ENCODE measurements at regions of chr7 and their contacts with region 1.

Region 1: DNA sequence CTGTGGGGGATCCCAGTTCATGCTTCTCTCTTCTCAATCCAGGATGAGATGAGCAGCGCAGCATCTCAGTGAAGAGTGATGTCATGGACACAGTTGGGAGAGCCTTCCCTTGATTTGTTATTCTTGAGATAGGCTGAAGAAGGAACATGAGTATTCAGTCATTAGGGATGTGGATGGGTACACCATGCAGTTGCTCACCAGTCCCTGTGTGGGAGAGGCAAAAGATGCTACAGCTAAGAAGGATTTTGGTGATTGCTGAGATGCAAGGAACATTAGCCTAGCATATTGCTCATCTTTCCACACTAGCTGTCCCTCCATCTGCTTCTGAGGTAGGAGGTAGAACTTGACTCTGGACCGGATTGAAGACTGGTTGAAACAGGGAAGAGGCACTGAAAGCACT is 179.6 kb downstream of the GALNT17 start:
- DNase-seq: no peak
- ATAC-seq: no peak
- H3K4me3 ChIP-seq: no peak overlapping the region
- H3K27ac ChIP-seq: peak overlapping the region in 5 of 10 donors; percentile 25 to 85 (median 68)
- H3K4me1 ChIP-seq: peaks cover 0 to 14% (median 0%) of the 10 kb centered on the region in 9 donors
- H3K27me3 ChIP-seq: no peaks in the 10 kb centered on the region
- CTCF ChIP-seq: no peak

Region 2: GRCh38 chr7:71019706-71020105 is 291.9 kb before region 1 on chr7:
- intact Hi-C with region 1: no loop called
- DNase-seq: peak; percentile 6 to 18
- ATAC-seq: peak in 3 of 8 donors; percentile 48 to 54 (median 54)
- H3K4me3 ChIP-seq: no peak overlapping the region
- H3K27ac ChIP-seq: no peak overlapping the region
- H3K4me1 ChIP-seq: no peaks in the 10 kb centered on the region
- H3K27me3 ChIP-seq: no peaks in the 10 kb centered on the region
- CTCF ChIP-seq: no peak

Region 3: GRCh38 chr7:71266912-71267311 is 44.7 kb before region 1 on chr7:
- intact Hi-C with region 1: loop called in 1 of 10 experiments (anchors 2 kb)
- DNase-seq: no peak
- ATAC-seq: no peak
- H3K4me3 ChIP-seq: no peak overlapping the region
- H3K27ac ChIP-seq: no peak overlapping the region
- H3K4me1 ChIP-seq: peaks cover 0 to 24% (median 0%) of the 10 kb centered on the region in 9 donors
- H3K27me3 ChIP-seq: no peaks in the 10 kb centered on the region
- CTCF ChIP-seq: no peak

Region 4: DNA sequence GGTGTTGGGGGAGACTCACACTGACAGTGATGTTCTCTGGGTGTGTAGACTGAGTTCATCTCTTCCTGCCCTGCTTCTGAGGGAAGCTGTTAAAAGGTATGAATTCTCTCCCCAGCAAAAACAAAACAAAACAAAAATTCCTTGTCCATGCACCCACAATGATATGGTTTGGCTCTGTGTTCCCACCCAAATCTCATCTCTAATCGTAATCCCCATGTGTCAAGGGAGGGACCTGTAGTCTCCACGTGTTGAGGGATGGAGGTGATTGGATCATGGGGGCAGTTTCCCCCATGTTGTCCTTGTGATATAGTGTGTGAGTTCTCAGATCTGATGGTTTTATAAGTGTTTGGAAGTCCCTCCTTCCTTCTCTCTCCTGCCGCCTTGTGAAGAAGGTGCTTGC is 65.9 kb after region 1 on chr7:
- intact Hi-C with region 1: loop called in 1 of 10 experiments (anchors 10 kb)
- DNase-seq: no peak
- ATAC-seq: no peak
- H3K4me3 ChIP-seq: no peak overlapping the region
- H3K27ac ChIP-seq: no peak overlapping the region
- H3K4me1 ChIP-seq: no peaks in the 10 kb centered on the region
- H3K27me3 ChIP-seq: no peaks in the 10 kb centered on the region
- CTCF ChIP-seq: no peak